ENCODE measurements at regions of chr1 and their contacts with region 1.

Region 1: GRCh38 chr1:2141036-2141435 is 53.5 kb downstream of the FAAP20 start:
- DNase-seq: no peak
- H3K4me3 ChIP-seq: no peak overlapping the region
- CTCF ChIP-seq: no peak

Region 2: DNA sequence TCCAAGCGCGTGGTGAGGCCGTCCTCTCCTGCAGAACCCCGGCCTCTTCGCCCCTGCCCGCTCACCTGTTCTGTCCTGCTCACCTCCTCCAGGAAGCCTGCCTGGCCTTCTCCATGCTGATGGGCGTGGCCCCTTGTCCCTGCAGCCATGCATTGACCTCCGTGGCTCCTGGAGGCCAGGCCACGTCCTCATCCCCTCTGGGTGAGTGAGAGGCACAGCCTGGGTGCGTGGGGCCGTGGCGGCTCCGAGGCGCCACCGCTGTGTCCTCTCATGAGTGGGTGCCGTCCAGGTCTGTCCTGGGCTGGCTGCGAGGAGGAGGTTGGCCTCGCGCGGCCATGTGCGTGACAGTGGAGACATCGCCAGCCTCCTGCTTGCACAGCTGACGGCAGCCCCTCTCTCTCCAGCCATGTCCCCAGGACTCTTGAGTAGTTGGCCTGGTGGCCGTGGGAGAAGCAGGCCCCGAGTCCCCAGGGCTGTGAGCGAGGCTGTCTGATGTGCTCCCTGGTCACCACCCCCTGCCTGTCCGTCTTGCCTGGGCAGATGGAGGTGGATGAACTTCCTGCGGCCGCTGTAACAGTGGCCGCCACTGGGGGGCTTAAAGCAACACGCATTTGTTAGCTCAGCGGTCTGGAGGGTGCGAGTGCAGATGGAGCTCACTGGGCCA is 32.7 kb before region 1 on chr1:
- CTCF ChIA-PET with region 1: interaction called, 14 read pairs
- POLR2A ChIA-PET with region 1: no interaction called
- DNase-seq: no peak
- H3K4me3 ChIP-seq: no peak overlapping the region
- CTCF ChIP-seq: peak; percentile 63

Region 3: GRCh38 chr1:2115681-2116341 is 25.2 kb before region 1 on chr1:
- CTCF ChIA-PET with region 1: interaction called, 14 read pairs
- POLR2A ChIA-PET with region 1: no interaction called
- DNase-seq: no peak
- H3K4me3 ChIP-seq: no peak overlapping the region
- CTCF ChIP-seq: no peak

Region 4: GRCh38 chr1:2163205-2163604 is 22.2 kb after region 1 on chr1:
- CTCF ChIA-PET with region 1: interaction called, 21 read pairs
- POLR2A ChIA-PET with region 1: no interaction called
- DNase-seq: no peak
- H3K4me3 ChIP-seq: no peak overlapping the region
- CTCF ChIP-seq: peak; percentile 2

Region 5: DNA sequence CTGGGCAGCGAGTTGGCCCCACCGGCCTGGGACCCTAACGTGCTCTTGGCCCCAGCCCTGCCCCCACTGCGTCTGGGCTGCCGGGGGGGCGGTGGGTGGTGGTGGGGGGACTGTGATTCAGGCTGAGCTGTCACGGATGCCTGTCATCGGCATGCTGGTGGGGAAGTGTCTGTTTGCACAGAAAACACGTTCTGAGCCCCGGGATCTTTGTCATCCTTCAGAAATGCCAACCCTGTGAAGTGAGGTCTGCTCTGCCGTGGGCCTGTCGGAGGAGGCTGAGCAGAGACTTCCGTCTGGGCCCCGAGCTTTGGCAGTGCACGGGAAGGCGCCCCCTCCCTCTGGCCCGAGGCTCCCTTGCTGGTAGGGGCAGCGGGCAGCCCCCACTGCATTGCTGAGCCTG is 310.7 kb after region 1 on chr1:
- CTCF ChIA-PET with region 1: no interaction called
- POLR2A ChIA-PET with region 1: no interaction called
- DNase-seq: peak; percentile 74
- H3K4me3 ChIP-seq: no peak overlapping the region; the same call in 1 of the 2 replicates
- CTCF ChIP-seq: no peak